ENCODE measurements at regions of chr10 and their contacts with region 1.

Region 1: GRCh38 chr10:97318772-97319651 is at the start of gene FRAT1:
- DNase-seq: peak; percentile 79 to 100 (median 91)
- ATAC-seq: peak; percentile 65 to 70
- H3K4me3 Mint-ChIP-seq: peak within 1 kb of the TSS; percentile 89 to 98 (median 97)
- H3K27ac Mint-ChIP-seq: peak within 1 kb of the TSS; percentile 99 to 100 (median 100)
- H3K4me1 Mint-ChIP-seq: peaks cover 19 to 41% (median 33%) of the 10 kb centered on the region in 4 donors
- H3K27me3 Mint-ChIP-seq: peaks cover 0 to 1% (median 0%) of the 10 kb centered on the region in 5 donors
- polyA plus RNA-seq, gene FRAT1: 7.5 to 12.8 (median 12.7) TPM

Region 2: DNA sequence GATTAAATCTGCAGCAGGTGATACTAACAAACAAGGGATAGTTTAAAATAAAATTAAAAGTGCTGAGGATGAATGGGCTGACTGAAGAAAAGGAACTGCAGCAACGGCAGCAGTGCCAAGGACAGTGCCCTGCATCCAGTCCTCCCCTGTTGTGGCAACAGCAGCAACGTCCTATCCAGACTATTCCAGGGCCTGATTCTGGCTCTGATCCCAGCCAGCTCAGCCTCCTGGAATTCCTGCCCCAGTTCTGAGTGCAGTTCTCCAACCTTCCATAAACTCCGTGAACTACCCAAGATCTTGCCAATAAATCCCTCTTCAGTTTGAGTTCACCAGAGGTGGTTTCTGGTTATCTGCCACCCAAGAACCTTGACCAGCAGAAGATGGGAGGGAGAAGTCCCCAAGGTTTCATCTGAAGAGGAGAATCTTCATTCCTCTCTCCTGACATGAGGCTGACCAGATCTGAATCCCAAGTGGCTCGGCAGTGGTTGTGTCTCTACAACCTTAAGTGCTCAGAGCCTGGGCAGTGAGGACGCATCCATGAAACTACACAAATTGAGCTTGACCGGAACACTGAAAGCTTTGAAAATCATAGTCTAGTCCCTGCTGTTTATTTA is 1873.7 kb before region 1 on chr10:
- POLR2A ChIA-PET with region 1: no interaction called
- DNase-seq: no peak
- ATAC-seq: no peak
- H3K4me3 Mint-ChIP-seq: no peak overlapping the region
- H3K27ac Mint-ChIP-seq: no peak overlapping the region
- H3K4me1 Mint-ChIP-seq: peaks cover 4 to 8% (median 7%) of the 10 kb centered on the region in 4 donors
- H3K27me3 Mint-ChIP-seq: peaks cover 3 to 16% (median 5%) of the 10 kb centered on the region in 5 donors

Region 3: DNA sequence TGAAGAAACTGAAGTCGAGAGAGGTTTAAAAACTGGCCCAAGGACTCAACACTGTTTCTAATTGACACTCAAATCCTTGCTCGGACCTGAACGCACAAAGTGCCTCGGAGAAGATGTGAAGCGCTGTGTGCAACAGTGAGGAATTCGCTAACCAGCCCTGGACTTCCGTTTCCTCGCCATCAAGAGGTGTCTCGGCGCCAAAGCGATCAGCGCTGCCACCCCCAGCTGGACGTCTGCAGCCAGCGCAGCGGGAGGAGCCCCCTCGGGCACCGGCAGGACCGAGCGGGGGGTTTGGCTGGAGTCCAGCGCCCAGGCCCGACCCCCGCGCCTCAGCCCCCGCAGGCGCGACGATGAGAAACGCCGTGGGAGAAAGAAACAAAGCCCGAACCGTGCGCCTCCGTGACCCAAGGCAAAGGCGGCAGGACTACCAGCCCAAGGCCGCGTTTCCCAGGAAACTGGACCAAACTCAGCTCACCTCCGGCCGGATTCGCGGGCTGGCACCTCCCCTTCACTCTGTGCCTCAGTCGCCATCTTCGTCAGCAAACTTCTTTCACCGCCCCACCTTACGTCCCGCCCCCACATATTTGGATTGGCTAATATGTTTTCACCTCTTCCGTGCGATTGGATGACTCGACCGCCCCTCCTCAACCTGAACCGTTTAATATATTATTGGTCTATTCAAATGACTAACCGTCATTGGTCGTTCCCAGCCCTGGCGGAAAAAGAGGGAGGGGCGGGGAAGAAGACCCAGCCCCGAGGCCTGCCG is 26.7 kb before region 1 on chr10 and contains the start of gene ARHGAP19:
- POLR2A ChIA-PET with region 1: interaction called, 24 read pairs
- DNase-seq: peak; percentile 73 to 97 (median 93)
- ATAC-seq: peak; percentile 98 to 100
- H3K4me3 Mint-ChIP-seq: peak within 1 kb of the TSS; percentile 87 to 98 (median 92)
- H3K27ac Mint-ChIP-seq: peak within 1 kb of the TSS; percentile 44 to 96 (median 87)
- H3K4me1 Mint-ChIP-seq: peaks cover 16 to 26% (median 21%) of the 10 kb centered on the region in 4 donors
- H3K27me3 Mint-ChIP-seq: peaks cover 0 to 2% (median 0%) of the 10 kb centered on the region in 5 donors
- polyA plus RNA-seq, gene ARHGAP19: 5.3 to 5.6 (median 5.3) TPM

Measured in naive thymus-derived CD8-positive, alpha-beta T cell (primary cell).